Heart left ventricle (tissue), 16 donors: ENCODE measurements at regions of chr1 and their contacts with region 1.

Region 1: GRCh38 chr1:206912445-206913095 is 9.2 kb downstream of the FCMR start:
- DNase-seq: peak in 4 of 5 donors; percentile 50 to 73 (median 64)
- ATAC-seq: peak; percentile 60 to 76 (median 64)
- H3K4me3 ChIP-seq: no peak overlapping the region
- H3K27ac ChIP-seq: no peak overlapping the region
- H3K4me1 ChIP-seq: peaks cover 0 to 25% (median 11%) of the 10 kb centered on the region in 12 donors
- H3K27me3 ChIP-seq: peaks cover 0 to 28% (median 10%) of the 10 kb centered on the region in 9 donors
- CTCF ChIP-seq: peak; percentile 75 to 88 (median 86)
- POLR2A ChIP-seq: no peak

Region 2: GRCh38 chr1:206489980-206490770 is 422.4 kb before region 1 on chr1:
- intact Hi-C with region 1: loop called in 5 of 10 experiments (anchors 5 to 10 kb)
- DNase-seq: peak; percentile 68 to 84 (median 78)
- ATAC-seq: peak; percentile 56 to 90 (median 86)
- H3K4me3 ChIP-seq: no peak overlapping the region
- H3K27ac ChIP-seq: no peak overlapping the region
- H3K4me1 ChIP-seq: peaks cover 0 to 36% (median 11%) of the 10 kb centered on the region in 12 donors
- H3K27me3 ChIP-seq: no peaks in the 10 kb centered on the region
- CTCF ChIP-seq: peak; percentile 88 to 98 (median 94)
- POLR2A ChIP-seq: no peak

Region 3: DNA sequence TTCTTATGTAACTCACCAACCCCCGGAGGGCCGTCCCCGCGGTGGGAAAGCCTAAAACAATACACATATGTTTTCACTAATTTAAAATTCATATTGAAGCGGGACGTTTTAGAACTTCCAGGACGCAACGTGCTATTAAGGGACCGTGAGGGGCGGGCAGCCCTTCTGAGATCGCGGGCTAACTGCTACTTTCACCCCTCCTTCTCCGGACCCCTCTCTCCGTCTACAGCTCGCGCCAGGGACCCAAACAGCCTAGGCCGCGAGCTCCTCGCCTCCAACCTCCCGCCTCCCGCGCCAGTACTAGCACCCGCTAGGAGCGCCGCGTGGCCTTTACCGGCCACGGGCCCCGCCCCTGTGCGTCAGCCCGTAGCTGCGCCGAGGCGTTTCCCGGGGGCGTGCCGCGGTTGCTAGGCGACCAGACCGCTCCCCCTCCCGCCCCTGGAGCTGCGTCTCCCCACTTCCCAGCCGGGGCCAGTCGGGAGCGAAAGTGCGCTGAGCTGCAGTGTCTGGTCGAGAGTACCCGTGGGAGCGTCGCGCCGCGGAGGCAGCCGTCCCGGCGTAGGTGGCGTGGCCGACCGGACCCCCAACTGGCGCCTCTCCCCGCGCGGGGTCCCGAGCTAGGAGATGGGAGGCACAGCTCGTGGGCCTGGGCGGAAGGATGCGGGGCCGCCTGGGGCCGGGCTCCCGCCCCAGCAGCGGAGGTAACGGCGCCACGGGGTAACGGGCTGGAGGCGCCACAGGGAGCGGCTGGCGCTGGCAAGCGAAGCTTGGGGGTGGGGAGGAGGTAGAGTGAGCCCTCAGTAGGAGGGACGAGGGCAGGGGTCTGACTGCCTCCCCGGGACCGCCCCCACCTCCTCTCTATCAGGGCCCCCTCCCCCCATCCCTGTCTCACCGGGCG is 277.2 kb before region 1 on chr1 and contains the start of gene DYRK3:
- intact Hi-C with region 1: loop called (anchors 1 to 5 kb)
- DNase-seq: peak; percentile 96 to 97 (median 97)
- ATAC-seq: peak; percentile 94 to 99 (median 98)
- H3K4me3 ChIP-seq: peak within 1 kb of the TSS; percentile 73 to 97 (median 90)
- H3K27ac ChIP-seq: peak within 1 kb of the TSS; percentile 19 to 95 (median 89)
- H3K4me1 ChIP-seq: peaks cover 0 to 54% (median 26%) of the 10 kb centered on the region in 12 donors
- H3K27me3 ChIP-seq: no peaks in the 10 kb centered on the region
- CTCF ChIP-seq: peak in 6 of 12 donors; percentile 9 to 41 (median 29)
- POLR2A ChIP-seq: peak; percentile 41 to 99
- total RNA-seq, gene DYRK3: 11.2 to 32.5 (median 15.9) TPM

Region 4: GRCh38 chr1:206734499-206735142 is 177.9 kb before region 1 on chr1:
- intact Hi-C with region 1: loop called in 9 of 10 experiments (anchors 2 to 5 kb)
- DNase-seq: no peak
- ATAC-seq: peak in 3 of 4 donors; percentile 11 to 37 (median 19)
- H3K4me3 ChIP-seq: no peak overlapping the region
- H3K27ac ChIP-seq: peak overlapping the region in 2 of 12 donors; percentile 6 to 60
- H3K4me1 ChIP-seq: peaks cover 0 to 64% (median 36%) of the 10 kb centered on the region in 12 donors
- H3K27me3 ChIP-seq: no peaks in the 10 kb centered on the region
- CTCF ChIP-seq: peak; percentile 42 to 74 (median 65)
- POLR2A ChIP-seq: no peak

Region 5: DNA sequence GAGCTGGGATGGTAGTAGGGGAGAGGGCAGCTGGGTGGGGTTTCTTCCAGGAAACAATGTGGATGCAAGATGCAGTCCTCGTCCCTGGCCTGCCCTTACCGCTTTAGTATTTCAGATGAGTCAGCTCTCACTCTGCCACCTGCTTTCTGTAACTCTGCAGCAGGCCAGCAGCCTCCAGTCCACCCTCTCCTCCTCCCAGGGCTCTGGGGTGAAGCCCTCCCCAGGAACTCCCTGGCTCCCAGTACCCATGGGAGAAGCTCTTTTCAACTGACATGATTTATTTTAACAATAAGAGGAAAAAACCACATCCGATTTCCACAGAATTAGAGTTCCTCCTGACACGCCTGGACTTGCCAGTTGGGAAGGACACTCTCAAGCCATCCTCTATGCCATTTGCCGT is 86.2 kb before region 1 on chr1:
- intact Hi-C with region 1: loop called in 1 of 10 experiments (anchors 5 kb)
- DNase-seq: no peak
- ATAC-seq: no peak
- H3K4me3 ChIP-seq: no peak overlapping the region
- H3K27ac ChIP-seq: no peak overlapping the region
- H3K4me1 ChIP-seq: peaks cover 0 to 34% (median 4%) of the 10 kb centered on the region in 12 donors
- H3K27me3 ChIP-seq: no peaks in the 10 kb centered on the region
- CTCF ChIP-seq: no peak
- POLR2A ChIP-seq: no peak

Region 6: DNA sequence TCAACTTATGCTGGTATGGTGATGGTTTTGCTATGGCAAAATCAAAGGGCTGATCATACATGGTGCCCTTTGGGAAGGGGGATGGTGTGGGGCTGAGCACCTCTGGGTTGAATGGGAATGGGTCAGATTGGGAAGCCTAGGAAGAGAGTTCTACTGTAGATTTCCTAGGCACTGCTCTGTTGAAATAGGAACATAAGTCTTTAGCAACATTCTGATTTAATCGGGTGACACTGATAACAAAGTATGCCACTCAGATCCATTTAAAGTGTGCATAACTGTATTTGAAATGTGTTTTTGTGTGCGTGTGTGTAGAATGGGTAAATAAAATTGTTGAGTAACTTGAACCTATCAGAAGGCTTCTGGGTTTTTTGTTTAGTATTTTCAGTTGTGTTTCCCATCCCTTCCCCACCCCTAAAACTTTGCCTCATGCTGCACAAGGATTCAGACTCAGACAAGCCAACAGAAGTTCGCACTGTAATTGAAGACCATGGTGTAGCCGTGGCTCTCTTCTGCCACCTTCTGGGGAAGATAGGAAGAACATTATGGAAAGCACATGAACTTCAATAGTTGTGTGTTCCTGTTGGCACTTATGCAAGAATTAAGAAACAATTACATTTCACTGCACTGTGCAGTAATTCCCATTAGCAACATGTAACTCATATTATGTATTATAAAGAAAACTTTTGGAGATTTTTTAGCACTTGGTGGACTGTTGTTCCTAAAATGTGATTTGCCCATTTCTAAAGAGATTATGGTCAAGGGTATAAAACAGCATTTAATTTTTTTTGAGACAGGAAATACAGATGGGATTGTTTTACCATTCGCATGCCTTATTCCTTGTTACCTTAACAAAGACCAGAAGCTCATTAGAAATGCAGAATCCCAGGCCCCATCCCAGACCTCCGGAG is 165.2 kb after region 1 on chr1:
- intact Hi-C with region 1: loop called in 2 of 10 experiments (anchors 5 to 10 kb)
- DNase-seq: peak in 3 of 5 donors; percentile 41 to 64 (median 63)
- ATAC-seq: peak; percentile 76 to 85 (median 82)
- H3K4me3 ChIP-seq: no peak overlapping the region
- H3K27ac ChIP-seq: peak overlapping the region in 6 of 12 donors; percentile 25 to 68 (median 46)
- H3K4me1 ChIP-seq: peaks cover 0 to 51% (median 11%) of the 10 kb centered on the region in 12 donors
- H3K27me3 ChIP-seq: no peaks in the 10 kb centered on the region
- CTCF ChIP-seq: peak; percentile 80 to 94 (median 89)
- POLR2A ChIP-seq: no peak